Tibial artery (tissue), 4 donors: ENCODE measurements at regions of chr1 and their contacts with region 1.

Region 1: GRCh38 chr1:207486198-207486597 is 9.8 kb upstream of the CR1 start:
- DNase-seq: no peak
- H3K4me3 ChIP-seq: no peak overlapping the region
- H3K27ac ChIP-seq: no peak overlapping the region
- H3K4me1 ChIP-seq: no peaks in the 10 kb centered on the region
- H3K27me3 ChIP-seq: peaks cover 0 to 2% of the 10 kb centered on the region in 2 donors
- CTCF ChIP-seq: no peak

Region 2: DNA sequence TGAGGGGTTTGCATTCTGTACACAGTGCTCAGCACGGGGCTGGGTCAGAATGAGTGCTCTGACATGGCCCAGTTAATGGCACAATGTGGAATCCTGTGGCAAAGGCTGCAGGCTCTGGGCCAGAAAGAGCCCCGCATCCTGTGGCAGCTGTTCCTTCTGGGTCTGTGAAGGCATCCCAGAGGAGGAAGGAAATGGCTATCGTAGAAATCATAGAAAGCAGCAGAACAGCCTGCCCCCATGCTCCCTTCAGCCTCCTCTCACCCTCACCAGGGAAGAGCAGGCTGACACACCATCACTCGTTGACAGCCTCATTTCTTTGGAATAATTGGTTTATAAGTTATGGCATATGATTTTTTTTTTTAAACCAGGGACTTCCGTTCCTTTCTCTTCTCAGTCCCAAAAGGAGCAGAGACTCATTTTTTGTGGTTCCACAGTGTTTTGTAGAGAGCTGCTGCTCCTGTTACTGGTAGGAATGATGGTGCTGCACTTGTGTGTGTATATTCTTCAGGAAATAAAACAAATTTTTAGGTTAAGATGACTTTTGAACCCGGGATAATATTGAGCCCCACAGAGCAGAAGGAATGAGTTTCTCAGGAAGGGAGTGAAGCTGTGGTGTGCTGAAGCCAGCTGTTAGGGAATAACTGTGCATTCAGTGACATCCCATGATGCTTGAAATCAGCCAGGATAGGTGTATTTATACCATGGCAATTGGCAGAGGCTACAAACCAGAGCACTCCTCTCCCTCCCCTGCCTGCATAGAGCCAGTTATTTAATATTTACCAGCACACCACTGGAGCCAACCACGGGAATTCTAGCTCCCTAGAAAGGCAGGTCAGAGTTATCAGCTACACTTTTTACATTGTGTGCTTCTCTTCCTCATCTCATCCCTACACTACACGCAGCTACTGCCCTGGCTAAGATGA is 726.0 kb after region 1 on chr1:
- intact Hi-C with region 1: no loop called
- DNase-seq: no peak
- H3K4me3 ChIP-seq: no peak overlapping the region
- H3K27ac ChIP-seq: peak overlapping the region; percentile 26 to 30
- H3K4me1 ChIP-seq: peaks cover 0 to 60% (median 38%) of the 10 kb centered on the region in 4 donors
- H3K27me3 ChIP-seq: no peaks in the 10 kb centered on the region
- CTCF ChIP-seq: no peak

Region 3: GRCh38 chr1:208309779-208310178 is 823.6 kb after region 1 on chr1:
- intact Hi-C with region 1: loop called (anchors 5 kb)
- DNase-seq: no peak
- H3K4me3 ChIP-seq: no peak overlapping the region
- H3K27ac ChIP-seq: no peak overlapping the region
- H3K4me1 ChIP-seq: no peaks in the 10 kb centered on the region
- H3K27me3 ChIP-seq: no peaks in the 10 kb centered on the region
- CTCF ChIP-seq: no peak